CD4-positive, alpha-beta T cell (primary cell): ENCODE measurements at regions of chr14 and their contacts with region 1.

Region 1: GRCh38 chr14:94080471-94081289 is at the start of gene DDX24:
- DNase-seq: peak; percentile 93 to 99 (median 96)
- ATAC-seq: peak; percentile 92
- H3K4me3 ChIP-seq: peak within 1 kb of the TSS; percentile 98
- H3K4me3 Mint-ChIP-seq: peak within 1 kb of the TSS; percentile 99
- H3K27ac ChIP-seq: peak within 1 kb of the TSS; percentile 93
- H3K27ac Mint-ChIP-seq: peak within 1 kb of the TSS; percentile 97
- H3K4me1 ChIP-seq: peaks cover 31% of the 10 kb centered on the region
- H3K4me1 Mint-ChIP-seq: peaks cover 63% of the 10 kb centered on the region
- H3K27me3 ChIP-seq: no peaks in the 10 kb centered on the region
- H3K27me3 Mint-ChIP-seq: no peaks in the 10 kb centered on the region
- CTCF ChIP-seq: no peak
- total RNA-seq, gene DDX24: 678 to 711 TPM

Region 2: DNA sequence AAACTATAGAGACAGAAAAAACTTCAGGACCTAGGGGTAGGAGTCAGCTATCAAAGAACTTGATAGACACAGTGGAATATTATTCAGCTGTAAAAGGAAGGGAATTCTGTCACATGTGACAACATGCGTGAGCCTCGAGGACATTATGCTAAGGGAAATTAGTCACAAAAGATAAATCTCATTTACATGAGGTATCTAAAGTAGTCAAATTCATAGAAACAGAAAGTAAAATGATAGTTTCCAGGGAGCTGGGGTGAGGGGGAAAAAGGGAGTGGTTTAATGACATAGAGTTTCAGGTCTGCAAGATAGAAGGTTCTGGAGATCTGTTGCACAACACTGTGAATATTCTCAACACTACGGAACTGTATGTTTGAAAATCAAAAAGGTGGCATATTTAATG is 242.4 kb before region 1 on chr14:
- CTCF ChIA-PET with region 1: no interaction called
- POLR2A ChIA-PET with region 1: no interaction called
- intact Hi-C with region 1: no loop called
- DNase-seq: no peak
- ATAC-seq: no peak
- H3K4me3 ChIP-seq: no peak overlapping the region
- H3K4me3 Mint-ChIP-seq: no peak overlapping the region
- H3K27ac ChIP-seq: no peak overlapping the region
- H3K27ac Mint-ChIP-seq: no peak overlapping the region
- H3K4me1 ChIP-seq: no peaks in the 10 kb centered on the region
- H3K4me1 Mint-ChIP-seq: no peaks in the 10 kb centered on the region
- H3K27me3 ChIP-seq: peaks cover 0 to 6% of the 10 kb centered on the region in 2 experiments
- H3K27me3 Mint-ChIP-seq: peaks cover 59% of the 10 kb centered on the region
- CTCF ChIP-seq: no peak

Region 3: GRCh38 chr14:93975791-93976476 is 104.7 kb before region 1 on chr14:
- CTCF ChIA-PET with region 1: no interaction called
- POLR2A ChIA-PET with region 1: interaction called, 12 read pairs
- intact Hi-C with region 1: no loop called
- DNase-seq: peak in 2 of 14 experiments; percentile 48 to 52
- ATAC-seq: no peak
- H3K4me3 ChIP-seq: peak overlapping the region; percentile 17
- H3K4me3 Mint-ChIP-seq: peak overlapping the region; percentile 8
- H3K27ac ChIP-seq: no peak overlapping the region
- H3K27ac Mint-ChIP-seq: peak overlapping the region; percentile 66
- H3K4me1 ChIP-seq: peaks cover 88% of the 10 kb centered on the region
- H3K4me1 Mint-ChIP-seq: peaks cover 67% of the 10 kb centered on the region
- H3K27me3 ChIP-seq: no peaks in the 10 kb centered on the region
- H3K27me3 Mint-ChIP-seq: no peaks in the 10 kb centered on the region
- CTCF ChIP-seq: no peak

Region 4: DNA sequence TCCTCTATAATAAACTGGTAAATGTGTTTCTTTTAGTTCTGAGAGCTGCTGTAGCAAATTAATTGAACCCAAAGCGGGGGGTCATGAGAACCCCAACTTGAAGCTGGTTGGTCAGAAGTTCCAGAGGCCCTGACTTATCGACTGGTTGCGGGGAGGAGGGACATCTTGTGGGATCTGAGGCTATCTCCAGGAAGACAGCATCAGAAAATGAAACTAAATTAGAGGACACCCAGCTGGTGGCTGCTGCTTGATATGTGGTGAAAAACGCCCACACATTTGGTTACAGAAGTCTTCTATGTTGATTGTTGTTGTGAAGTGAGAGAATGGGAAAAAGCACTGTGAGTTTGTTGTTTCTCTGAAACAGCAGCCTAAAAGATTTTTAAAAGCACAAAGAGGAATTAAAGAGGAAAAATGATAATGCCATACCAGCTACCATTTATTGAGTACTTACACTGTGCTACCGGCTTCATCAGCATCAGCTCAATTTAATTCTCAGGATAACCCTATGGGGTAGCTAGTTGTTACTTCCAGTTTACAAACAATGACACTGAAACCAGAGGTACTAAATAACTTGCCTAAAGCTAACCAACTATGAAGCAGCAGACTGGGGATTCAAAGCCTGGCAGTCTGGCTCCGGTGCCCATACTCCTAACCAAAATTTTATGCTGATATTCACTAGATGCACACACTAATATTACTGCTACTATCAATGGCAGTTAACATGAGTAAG is 23.9 kb before region 1 on chr14:
- CTCF ChIA-PET with region 1: no interaction called
- POLR2A ChIA-PET with region 1: interaction called, 11 read pairs
- intact Hi-C with region 1: no loop called
- DNase-seq: peak in 3 of 14 experiments; percentile 27 to 59 (median 36)
- ATAC-seq: no peak
- H3K4me3 ChIP-seq: no peak overlapping the region
- H3K4me3 Mint-ChIP-seq: no peak overlapping the region
- H3K27ac ChIP-seq: no peak overlapping the region
- H3K27ac Mint-ChIP-seq: peak overlapping the region; percentile 65
- H3K4me1 ChIP-seq: peaks cover 36% of the 10 kb centered on the region
- H3K4me1 Mint-ChIP-seq: peaks cover 66% of the 10 kb centered on the region
- H3K27me3 ChIP-seq: no peaks in the 10 kb centered on the region
- H3K27me3 Mint-ChIP-seq: no peaks in the 10 kb centered on the region
- CTCF ChIP-seq: no peak

Region 5: GRCh38 chr14:94129111-94129757 is 48.6 kb after region 1 on chr14 and contains the start of gene IFI27L2:
- CTCF ChIA-PET with region 1: interaction called, 5 read pairs
- POLR2A ChIA-PET with region 1: interaction called, 33 read pairs
- intact Hi-C with region 1: loop called (anchors 2 kb)
- DNase-seq: peak; percentile 27 to 84 (median 51)
- ATAC-seq: peak; percentile 93
- H3K4me3 ChIP-seq: peak within 1 kb of the TSS; percentile 73
- H3K4me3 Mint-ChIP-seq: peak within 1 kb of the TSS; percentile 88
- H3K27ac ChIP-seq: peak within 1 kb of the TSS in 1 of 2 donors; percentile 19
- H3K27ac Mint-ChIP-seq: peak within 1 kb of the TSS; percentile 45
- H3K4me1 ChIP-seq: peaks cover 18% of the 10 kb centered on the region
- H3K4me1 Mint-ChIP-seq: peaks cover 20% of the 10 kb centered on the region
- H3K27me3 ChIP-seq: no peaks in the 10 kb centered on the region
- H3K27me3 Mint-ChIP-seq: no peaks in the 10 kb centered on the region
- CTCF ChIP-seq: peak; percentile 41
- total RNA-seq, gene IFI27L2: 21.5 to 22.2 TPM